ENCODE measurements at regions of chr6 and their contacts with region 1.

Region 1: GRCh38 chr6:31079656-31080261 is 32.6 kb downstream of the C6orf15 start:
- DNase-seq: peak; percentile 82
- H3K4me3 Mint-ChIP-seq: no peak overlapping the region
- H3K27ac Mint-ChIP-seq: no peak overlapping the region
- H3K4me1 Mint-ChIP-seq: peaks cover 8% of the 10 kb centered on the region
- H3K27me3 Mint-ChIP-seq: peaks cover 52% of the 10 kb centered on the region

Region 2: DNA sequence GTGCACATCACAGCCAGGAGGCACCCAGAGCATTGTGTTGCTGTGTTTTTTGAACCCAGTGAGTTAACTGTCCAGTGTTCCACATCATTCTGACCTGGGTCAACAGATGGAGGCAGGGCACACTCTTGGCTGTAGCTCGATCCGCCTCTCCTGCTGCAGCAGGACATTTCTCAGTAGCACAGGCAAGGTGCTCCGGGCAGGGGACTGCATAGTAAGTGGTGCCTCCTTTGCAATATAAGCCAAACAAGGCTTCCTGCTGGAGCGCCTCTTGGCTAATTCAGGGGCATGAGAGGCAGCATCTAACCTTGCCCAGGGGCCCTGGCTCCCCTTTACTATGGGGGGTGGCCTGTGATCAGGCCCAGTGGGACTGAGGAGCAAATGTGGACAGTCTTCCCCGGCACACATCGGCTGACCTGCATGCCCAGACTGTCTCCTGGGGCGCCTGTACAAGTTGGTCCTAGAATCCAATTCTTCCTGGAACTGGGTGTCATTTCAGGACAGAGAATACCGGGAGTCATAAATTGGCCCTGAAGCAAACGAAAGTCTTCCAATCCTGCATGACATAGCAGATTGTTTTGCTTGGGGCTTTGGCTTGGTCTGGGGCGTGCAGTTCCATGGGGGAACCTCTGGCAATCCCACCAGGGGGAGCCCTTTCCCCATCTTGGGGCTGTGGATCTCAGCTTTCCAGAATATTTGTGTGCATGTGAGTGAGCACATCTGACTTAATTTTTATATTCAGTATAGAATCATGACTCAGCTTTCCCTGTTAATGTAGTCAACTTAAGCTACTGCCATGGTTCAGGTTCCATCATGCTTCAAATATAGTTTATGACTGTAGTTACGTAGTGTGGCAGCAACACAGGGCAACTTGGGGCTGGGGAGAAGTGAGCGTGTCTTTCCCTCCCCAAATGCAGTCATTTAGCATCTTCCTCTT is 251.5 kb before region 1 on chr6:
- CTCF ChIA-PET with region 1: interaction called, 16 read pairs
- DNase-seq: peak; percentile 88
- H3K4me3 Mint-ChIP-seq: peak overlapping the region; percentile 86
- H3K27ac Mint-ChIP-seq: peak overlapping the region; percentile 75
- H3K4me1 Mint-ChIP-seq: peaks cover 69% of the 10 kb centered on the region
- H3K27me3 Mint-ChIP-seq: no peaks in the 10 kb centered on the region

Region 3: DNA sequence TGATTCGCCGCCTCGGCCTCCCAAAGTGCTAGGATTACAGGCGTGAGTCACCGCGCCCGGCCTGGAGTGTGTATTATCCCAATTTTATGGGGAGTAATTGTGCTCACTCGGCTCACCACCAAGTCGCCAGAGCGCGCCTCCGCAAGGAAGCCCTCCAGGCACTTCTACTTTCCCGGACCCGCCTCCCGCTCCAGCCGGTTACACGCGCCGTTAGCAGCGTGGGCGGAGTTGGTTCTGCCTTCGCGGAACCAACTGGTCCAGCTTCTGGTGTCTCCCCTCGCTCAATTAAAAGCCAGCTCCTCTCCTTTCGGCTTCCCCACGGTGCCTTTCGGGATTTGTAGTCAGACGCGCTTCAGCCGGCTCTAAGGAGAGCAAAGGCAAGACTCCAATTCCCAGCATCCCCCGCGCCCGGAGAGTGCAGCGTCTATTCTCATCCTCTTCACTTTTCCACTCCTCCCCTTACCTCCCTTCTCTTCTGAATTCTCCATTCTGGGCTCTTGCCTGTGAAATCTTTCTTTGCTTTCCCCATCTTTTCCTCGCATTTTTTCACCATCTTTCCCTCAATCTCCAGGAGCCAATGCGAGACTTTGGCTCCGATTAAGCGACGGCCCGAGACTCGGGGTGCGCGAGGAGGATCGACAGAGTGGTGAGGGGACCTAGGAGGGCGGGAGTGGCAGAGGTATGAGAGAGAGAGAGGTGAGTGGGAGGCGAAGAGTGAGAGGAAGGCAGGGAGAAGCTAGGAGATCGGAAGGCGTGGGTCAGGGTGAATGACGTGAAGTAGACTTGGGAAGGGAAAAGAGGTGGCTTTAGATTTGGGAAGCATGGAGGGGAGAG is 171.8 kb before region 1 on chr6 and contains the start of gene GTF2H4:
- CTCF ChIA-PET with region 1: interaction called, 202 read pairs
- DNase-seq: peak; percentile 98
- H3K4me3 Mint-ChIP-seq: peak within 1 kb of the TSS; percentile 97
- H3K27ac Mint-ChIP-seq: peak within 1 kb of the TSS; percentile 71
- H3K4me1 Mint-ChIP-seq: peaks cover 25% of the 10 kb centered on the region
- H3K27me3 Mint-ChIP-seq: no peaks in the 10 kb centered on the region

Region 4: GRCh38 chr6:30974488-30975252 is 105.1 kb before region 1 on chr6:
- CTCF ChIA-PET with region 1: no interaction called
- DNase-seq: no peak
- H3K4me3 Mint-ChIP-seq: no peak overlapping the region
- H3K27ac Mint-ChIP-seq: no peak overlapping the region
- H3K4me1 Mint-ChIP-seq: no peaks in the 10 kb centered on the region
- H3K27me3 Mint-ChIP-seq: peaks cover 27% of the 10 kb centered on the region

Region 5: GRCh38 chr6:31058128-31058894 is 21.4 kb before region 1 on chr6:
- CTCF ChIA-PET with region 1: interaction called, 13 read pairs
- DNase-seq: no peak
- H3K4me3 Mint-ChIP-seq: no peak overlapping the region
- H3K27ac Mint-ChIP-seq: no peak overlapping the region
- H3K4me1 Mint-ChIP-seq: no peaks in the 10 kb centered on the region
- H3K27me3 Mint-ChIP-seq: peaks cover 52% of the 10 kb centered on the region

Region 6: DNA sequence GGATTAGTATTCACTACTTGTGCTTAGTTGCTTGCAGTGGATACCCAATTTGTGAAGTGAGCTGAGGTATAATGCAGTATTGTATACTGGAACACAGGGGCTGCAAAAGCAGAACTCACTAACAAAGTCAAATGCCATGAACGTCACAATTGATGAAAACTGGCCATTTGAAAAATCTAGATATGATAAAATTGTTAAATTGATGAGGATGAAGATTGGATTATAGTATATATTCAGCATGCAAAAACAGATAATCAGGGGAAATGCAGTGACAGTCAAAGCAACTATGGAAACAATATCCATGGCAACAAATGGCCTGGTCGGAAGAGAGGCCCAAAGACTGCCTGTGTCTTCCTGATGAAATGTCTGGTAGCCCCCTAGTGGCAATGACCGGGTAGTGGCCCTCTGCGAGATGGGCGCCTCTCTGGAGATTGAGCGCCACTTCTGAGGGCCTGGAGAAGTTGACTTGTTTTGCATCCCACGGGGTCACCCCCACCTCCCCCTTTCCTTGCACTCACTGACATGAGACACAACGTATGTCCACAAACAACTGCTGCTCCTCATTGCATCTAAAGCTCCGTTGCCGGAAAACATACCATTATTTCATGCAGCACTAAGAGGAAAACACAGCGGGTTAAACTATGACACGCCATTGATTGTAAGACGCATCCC is 11.0 kb before region 1 on chr6:
- CTCF ChIA-PET with region 1: interaction called, 30 read pairs
- DNase-seq: peak; percentile 78
- H3K4me3 Mint-ChIP-seq: no peak overlapping the region
- H3K27ac Mint-ChIP-seq: no peak overlapping the region
- H3K4me1 Mint-ChIP-seq: no peaks in the 10 kb centered on the region
- H3K27me3 Mint-ChIP-seq: peaks cover 7% of the 10 kb centered on the region

Region 7: DNA sequence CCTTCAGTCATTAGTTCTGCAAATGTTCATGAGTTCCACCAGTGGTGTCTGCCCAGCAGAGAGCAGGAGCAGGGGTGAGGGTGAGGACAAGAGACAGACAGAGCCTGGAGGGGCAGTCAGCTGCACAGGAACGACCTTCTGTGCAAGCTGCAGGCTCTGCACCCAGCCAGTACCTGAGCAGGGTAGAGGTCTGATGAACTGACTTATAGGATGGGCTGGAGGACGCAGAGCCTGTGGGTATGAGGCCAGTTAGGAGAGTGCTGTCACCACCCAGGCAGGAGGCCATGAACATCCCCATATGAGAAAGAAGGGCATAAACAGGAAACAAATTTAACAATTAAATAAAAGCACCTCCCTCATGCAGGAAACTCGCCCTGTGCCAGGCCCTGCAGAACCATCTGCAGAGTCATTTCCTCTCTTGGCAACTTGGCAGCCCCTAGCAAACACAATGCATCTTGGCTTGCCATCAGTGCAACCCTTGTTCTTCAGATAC is 14.7 kb after region 1 on chr6:
- CTCF ChIA-PET with region 1: interaction called, 13 read pairs
- DNase-seq: peak; percentile 60
- H3K4me3 Mint-ChIP-seq: no peak overlapping the region
- H3K27ac Mint-ChIP-seq: peak overlapping the region; percentile 91
- H3K4me1 Mint-ChIP-seq: peaks cover 37% of the 10 kb centered on the region
- H3K27me3 Mint-ChIP-seq: peaks cover 13% of the 10 kb centered on the region